Caco-2 (cell line): ENCODE measurements at regions of chr2 and their contacts with region 1.

Region 1: DNA sequence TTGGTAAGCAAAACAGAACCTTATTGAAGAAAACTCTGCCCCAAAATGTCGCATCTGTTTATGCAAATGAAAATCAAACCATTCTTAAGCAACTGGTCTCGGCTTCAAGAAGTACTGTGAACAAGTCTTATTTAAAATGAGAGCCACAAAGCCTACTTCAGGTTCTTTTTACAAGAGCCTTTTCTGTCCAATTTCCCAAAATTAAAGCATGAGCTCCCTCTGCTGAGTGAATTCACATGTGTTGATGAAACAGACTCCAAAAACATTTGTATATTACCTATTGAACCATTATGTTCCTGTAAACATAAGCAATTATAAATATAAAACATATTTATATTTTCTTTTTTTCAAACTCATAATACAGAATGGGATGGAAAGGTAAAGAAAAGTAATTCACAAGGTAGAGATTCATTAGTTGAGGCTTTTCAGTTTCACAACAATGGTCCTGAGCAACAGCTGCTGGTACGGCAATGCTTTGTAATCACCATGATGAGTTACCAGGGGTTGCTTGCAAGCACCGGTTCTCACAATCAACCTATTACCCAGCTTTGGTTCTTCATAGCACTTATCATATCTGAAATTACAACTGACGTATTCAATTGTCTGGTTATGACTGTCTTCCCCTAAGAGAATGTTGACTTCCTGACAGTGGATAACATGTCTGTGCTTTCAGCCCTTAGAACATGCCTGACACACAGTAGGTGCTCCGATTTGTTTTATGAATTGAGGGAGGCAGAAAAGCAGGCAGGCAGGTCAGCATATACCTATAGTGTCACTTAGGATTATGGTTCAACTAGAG is 108.4 kb upstream of the BZW1 start:
- DNase-seq: peak in 1 of 2 experiments; percentile 60
- H3K4me3 ChIP-seq: no peak overlapping the region
- H3K4me3 Mint-ChIP-seq: no peak overlapping the region
- H3K27ac Mint-ChIP-seq: no peak overlapping the region
- H3K4me1 ChIP-seq: no peaks in the 10 kb centered on the region
- H3K4me1 Mint-ChIP-seq: peaks cover 13% of the 10 kb centered on the region
- H3K27me3 ChIP-seq: no peaks in the 10 kb centered on the region; the same call in 1 of the 2 replicates
- H3K27me3 Mint-ChIP-seq: no peaks in the 10 kb centered on the region
- CTCF ChIP-seq: peak; percentile 42 to 58

Region 2: GRCh38 chr2:199979832-199980628 is 723.3 kb before region 1 on chr2:
- CTCF ChIA-PET with region 1: no interaction called
- POLR2A ChIA-PET with region 1: no interaction called
- intact Hi-C with region 1: loop called (anchors 1 kb)
- DNase-seq: peak; percentile 76 to 83
- H3K4me3 ChIP-seq: no peak overlapping the region
- H3K4me3 Mint-ChIP-seq: peak overlapping the region; percentile 9
- H3K27ac Mint-ChIP-seq: no peak overlapping the region
- H3K4me1 ChIP-seq: peaks cover 20% of the 10 kb centered on the region
- H3K4me1 Mint-ChIP-seq: peaks cover 20% of the 10 kb centered on the region
- H3K27me3 ChIP-seq: no peaks in the 10 kb centered on the region
- H3K27me3 Mint-ChIP-seq: no peaks in the 10 kb centered on the region
- CTCF ChIP-seq: peak; percentile 74 to 87

Region 3: DNA sequence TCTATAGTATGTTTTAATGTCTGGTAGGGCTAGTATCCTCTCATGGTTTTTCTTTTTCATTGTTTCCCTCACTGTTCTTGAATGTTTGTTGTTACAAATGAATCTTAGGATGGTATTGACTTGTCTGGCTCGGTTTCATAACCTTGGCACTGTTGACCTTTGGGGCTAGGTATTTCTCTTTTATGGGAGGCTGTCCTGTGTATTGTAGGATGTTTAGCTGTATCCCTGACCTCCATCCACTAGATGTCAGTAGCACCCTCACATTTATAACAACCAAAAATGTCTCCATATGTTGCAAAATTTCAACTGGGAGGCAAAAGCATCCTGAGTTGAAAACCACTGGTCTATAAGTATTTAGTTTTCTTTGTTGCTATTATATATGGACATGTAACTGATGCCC is 124.5 kb before region 1 on chr2:
- CTCF ChIA-PET with region 1: interaction called, 12 read pairs
- POLR2A ChIA-PET with region 1: no interaction called
- intact Hi-C with region 1: loop called (anchors 1 kb)
- DNase-seq: peak in 1 of 2 experiments; percentile 65
- H3K4me3 ChIP-seq: no peak overlapping the region
- H3K4me3 Mint-ChIP-seq: no peak overlapping the region
- H3K27ac Mint-ChIP-seq: no peak overlapping the region
- H3K4me1 ChIP-seq: peaks cover 6% of the 10 kb centered on the region; the same call in 1 of the 2 replicates
- H3K4me1 Mint-ChIP-seq: peaks cover 7% of the 10 kb centered on the region
- H3K27me3 ChIP-seq: no peaks in the 10 kb centered on the region
- H3K27me3 Mint-ChIP-seq: no peaks in the 10 kb centered on the region
- CTCF ChIP-seq: peak; percentile 68 to 76

Region 4: DNA sequence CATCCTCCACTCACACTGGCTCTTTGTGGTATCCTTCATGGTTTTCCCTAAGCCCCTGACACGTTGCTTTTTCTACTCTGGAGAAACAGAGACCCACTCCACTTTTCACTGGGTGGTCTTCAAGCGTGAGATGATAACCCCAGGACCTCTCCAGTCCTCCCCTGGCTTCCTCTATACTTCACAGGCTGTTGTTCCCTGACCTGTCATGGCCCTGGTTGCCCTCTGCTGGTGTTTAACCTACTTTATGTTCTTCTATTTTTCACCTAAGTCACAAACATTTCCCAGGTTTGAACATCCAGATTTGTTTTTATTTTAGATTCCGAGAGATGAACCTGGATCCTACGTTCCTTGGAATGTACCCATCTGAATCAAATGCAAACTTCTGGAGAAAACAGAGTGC is 33.0 kb before region 1 on chr2:
- CTCF ChIA-PET with region 1: no interaction called
- POLR2A ChIA-PET with region 1: no interaction called
- intact Hi-C with region 1: loop called (anchors 1 kb)
- DNase-seq: peak in 1 of 2 experiments; percentile 13
- H3K4me3 ChIP-seq: no peak overlapping the region
- H3K4me3 Mint-ChIP-seq: no peak overlapping the region
- H3K27ac Mint-ChIP-seq: no peak overlapping the region
- H3K4me1 ChIP-seq: peaks cover 16% of the 10 kb centered on the region
- H3K4me1 Mint-ChIP-seq: no peaks in the 10 kb centered on the region
- H3K27me3 ChIP-seq: no peaks in the 10 kb centered on the region
- H3K27me3 Mint-ChIP-seq: no peaks in the 10 kb centered on the region
- CTCF ChIP-seq: peak; percentile 15 to 18